HEK293 (cell line): ENCODE measurements at regions of chr7 and their contacts with region 1.

Region 1: GRCh38 chr7:78134256-78134655 is 335.7 kb downstream of the PHTF2 start:
- H3K4me3 ChIP-seq: no peak overlapping the region
- H3K27ac ChIP-seq: no peak overlapping the region
- H3K4me1 ChIP-seq: no peaks in the 10 kb centered on the region
- CTCF ChIP-seq: no peak

Region 2: DNA sequence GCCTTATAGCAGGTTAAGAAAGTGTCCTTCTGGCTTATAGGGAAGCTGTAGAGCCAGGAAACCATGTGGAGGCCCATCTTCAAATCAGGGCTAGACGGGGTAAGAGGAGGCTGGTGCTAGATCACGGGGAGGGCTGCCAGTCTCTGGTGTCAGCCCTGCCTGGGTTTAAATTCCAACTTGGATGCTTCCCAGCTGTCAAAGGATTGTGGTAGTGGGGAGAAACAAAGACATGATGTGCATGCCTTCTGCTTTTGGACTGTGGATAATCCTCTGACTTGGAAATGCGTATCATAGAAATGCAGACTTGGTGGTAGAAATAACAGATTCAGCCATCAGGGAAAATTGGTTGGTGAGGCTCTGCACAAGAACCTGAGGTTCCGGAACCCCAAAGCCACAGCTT is 10.0 kb before region 1 on chr7:
- CTCF ChIA-PET with region 1: interaction called, 12 read pairs
- POLR2A ChIA-PET with region 1: no interaction called
- H3K4me3 ChIP-seq: no peak overlapping the region
- H3K27ac ChIP-seq: no peak overlapping the region
- H3K4me1 ChIP-seq: no peaks in the 10 kb centered on the region
- CTCF ChIP-seq: no peak

Region 3: DNA sequence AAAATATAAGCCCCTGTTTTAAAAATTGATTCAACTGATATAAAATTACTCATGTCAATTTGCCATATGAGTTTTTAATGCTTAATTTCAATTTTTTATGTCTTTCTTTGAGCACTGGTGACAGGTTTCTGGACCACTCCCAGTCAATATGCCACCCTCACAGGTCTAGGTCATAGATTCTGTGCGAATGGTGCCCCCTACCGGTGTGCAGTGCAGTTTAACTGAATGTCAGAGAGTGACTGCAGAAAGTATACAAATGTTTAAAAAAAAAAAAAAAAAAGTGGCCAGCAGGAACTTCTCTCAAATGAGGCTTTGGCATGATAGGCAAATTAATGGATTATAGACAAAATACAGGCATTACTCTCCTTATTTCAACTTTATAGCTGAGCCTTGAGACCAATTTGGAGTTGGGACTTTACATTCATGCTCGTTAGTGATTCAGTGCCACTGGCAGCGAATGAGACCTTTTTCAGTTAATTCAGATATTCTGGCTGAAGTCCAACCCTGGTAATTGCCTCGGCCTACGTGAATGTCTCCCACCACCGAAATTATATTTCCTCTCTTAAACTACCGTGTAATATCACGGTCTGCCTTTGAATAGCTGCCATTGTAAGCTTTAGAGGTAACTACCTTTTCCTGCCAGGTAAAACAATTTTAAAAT is 91.9 kb after region 1 on chr7:
- CTCF ChIA-PET with region 1: interaction called, 22 read pairs
- POLR2A ChIA-PET with region 1: no interaction called
- H3K4me3 ChIP-seq: no peak overlapping the region
- H3K27ac ChIP-seq: no peak overlapping the region
- H3K4me1 ChIP-seq: no peaks in the 10 kb centered on the region
- CTCF ChIP-seq: no peak